Ascending aorta (tissue), 2 donors: ENCODE measurements at regions of chr5 and their contacts with region 1.

Region 1: DNA sequence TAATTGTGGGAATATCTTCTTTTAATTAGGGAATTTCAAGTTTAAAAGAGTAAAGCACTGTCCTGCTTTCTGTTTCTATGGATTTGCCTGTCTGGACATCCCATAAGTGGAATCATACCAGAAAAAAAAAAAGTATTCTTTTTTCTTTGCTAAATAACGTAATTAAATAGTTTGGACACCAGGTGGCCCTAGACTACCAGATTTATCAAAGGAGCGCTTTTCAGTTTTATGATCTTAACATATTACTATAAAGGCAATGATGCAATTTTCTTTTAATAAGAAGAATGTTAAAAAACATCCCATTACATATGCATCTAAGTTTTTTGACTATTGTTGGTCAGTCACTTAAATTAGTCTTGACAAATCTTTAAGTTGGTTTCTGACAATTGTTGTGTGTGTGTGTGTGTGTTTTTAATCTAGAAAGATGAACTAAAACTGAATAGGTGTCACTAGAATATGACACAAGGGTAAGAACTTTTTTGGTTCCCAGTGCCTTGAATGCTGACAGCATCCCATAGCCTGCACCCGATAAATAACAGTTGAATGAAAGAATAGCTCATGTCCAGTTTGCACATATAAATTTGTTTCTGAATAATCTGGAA is 49.5 kb downstream of the C5orf22 start:
- DNase-seq: no peak
- H3K4me3 ChIP-seq: no peak overlapping the region
- H3K27ac ChIP-seq: no peak overlapping the region
- H3K4me1 ChIP-seq: no peaks in the 10 kb centered on the region
- H3K27me3 ChIP-seq: no peaks in the 10 kb centered on the region
- CTCF ChIP-seq: peak; percentile 25 to 59 (median 33)

Region 2: DNA sequence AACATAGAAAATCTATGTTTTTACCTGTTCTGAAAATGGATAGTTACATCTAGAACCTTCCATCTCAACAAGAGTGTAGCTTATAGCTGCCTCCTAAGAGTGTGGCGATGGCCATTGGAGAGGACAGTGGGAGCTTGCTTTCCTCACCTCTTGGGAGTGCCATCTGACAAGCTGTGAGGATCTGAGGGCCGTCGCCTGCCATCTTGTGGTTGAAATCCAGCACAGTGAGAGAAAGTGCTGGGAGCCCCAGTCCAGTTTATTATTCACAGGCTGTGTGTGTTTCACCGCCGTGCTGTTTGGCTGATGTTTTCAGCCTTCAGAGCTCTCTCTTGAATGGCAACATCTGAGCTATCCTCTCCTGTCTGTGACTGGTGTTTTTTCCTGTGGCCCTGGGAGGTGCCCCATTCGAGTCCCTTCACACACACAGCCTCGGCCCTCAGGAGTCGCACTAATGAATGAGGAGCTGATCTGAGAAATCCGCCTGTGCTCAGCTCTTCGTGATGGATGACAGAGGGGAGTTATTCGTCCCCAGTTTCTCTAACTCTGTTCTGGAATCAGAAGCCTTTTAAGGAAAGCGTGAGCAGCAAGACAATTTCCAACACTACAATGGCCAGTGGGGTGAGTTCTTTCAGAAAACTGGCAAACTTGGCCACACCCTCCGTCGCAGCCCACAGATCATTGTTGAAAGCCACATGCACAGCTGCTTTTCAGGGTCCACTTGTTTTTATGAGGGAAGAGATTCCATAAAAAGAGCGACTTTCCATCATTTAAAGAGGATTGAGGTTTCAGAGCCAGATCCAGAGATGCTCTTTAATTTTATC is 227.7 kb after region 1 on chr5:
- intact Hi-C with region 1: loop called (anchors 1 kb)
- DNase-seq: peak in 1 of 2 donors; percentile 79
- H3K4me3 ChIP-seq: no peak overlapping the region
- H3K27ac ChIP-seq: no peak overlapping the region
- H3K4me1 ChIP-seq: no peaks in the 10 kb centered on the region
- H3K27me3 ChIP-seq: no peaks in the 10 kb centered on the region
- CTCF ChIP-seq: peak; percentile 50 to 77 (median 64)

Region 3: DNA sequence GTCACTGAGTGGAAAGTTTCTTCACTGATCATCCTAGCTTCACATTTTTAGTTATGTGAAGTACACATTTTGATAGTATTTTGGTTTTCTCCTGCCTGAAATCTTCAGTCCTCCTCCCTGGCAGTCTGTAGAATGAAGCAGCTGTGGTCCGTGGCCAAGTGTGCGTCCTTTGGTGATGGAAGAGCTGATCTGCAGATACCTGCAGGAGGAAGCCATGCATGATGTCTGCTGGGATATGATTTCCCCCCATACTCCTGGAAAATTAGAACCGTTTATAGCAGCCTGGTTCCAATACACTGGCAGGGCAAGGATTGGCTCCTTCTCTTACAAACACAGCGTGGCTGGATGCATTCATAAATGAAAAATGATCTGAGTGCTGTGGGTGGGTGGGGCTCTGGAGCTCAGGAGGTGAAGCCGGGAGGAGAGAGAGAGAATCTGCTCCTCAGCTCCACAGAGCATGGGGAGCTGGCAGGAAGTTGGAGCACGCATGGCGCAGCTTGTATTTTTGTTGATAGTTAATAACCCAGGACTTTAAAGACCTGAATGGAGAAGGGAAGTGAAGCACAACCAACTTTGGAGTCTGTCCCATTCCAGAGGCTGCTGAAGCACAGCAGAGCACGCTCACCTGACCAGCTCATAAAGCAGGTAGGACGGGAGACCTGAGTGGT is 354.2 kb after region 1 on chr5:
- intact Hi-C with region 1: no loop called
- DNase-seq: no peak
- H3K4me3 ChIP-seq: no peak overlapping the region
- H3K27ac ChIP-seq: no peak overlapping the region
- H3K4me1 ChIP-seq: no peaks in the 10 kb centered on the region
- H3K27me3 ChIP-seq: no peaks in the 10 kb centered on the region
- CTCF ChIP-seq: no peak

Region 4: GRCh38 chr5:32092938-32093812 is 511.6 kb after region 1 on chr5:
- intact Hi-C with region 1: loop called (anchors 2 kb)
- DNase-seq: peak in 1 of 2 donors; percentile 78
- H3K4me3 ChIP-seq: no peak overlapping the region
- H3K27ac ChIP-seq: no peak overlapping the region
- H3K4me1 ChIP-seq: peaks cover 0 to 7% of the 10 kb centered on the region in 2 donors
- H3K27me3 ChIP-seq: no peaks in the 10 kb centered on the region
- CTCF ChIP-seq: peak; percentile 65 to 71 (median 65)